ENCODE measurements at regions of chr3 and their contacts with region 1.

Region 1: DNA sequence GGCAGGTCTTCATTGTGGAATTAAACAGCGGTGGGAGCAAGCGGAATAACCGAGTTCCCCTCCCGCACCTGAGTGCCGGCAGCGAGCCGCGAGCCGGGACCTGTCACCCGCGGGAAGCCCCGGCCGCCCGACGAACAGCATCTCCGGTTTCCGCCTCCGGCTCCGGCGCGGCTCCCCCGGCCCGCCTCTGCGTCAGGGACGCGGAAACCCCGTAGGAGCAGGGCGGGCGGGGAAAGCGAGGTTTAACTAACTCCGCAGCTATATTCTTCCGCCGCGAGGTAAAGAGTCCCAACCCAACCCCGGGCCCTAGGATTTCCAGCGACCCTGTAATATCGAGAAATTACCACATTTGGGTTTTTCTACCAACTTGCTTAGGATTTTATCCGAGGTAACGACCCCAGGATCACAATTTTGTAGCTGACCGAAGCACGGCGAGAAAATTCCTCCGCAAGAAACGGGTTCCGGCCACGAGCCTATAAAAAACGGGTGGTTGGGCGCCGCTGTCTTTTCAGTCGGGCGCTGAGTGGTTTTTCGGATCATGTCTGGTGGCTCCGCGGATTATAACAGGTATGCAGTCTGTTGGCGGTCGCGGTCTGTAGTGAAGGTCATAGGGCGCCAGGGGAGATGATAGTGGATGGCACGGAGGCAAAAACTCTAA is at the start of gene EIF4A2:
- DNase-seq: peak; percentile 88
- ATAC-seq: peak; percentile 77
- H3K4me3 Mint-ChIP-seq: peak within 1 kb of the TSS; percentile 98
- H3K27ac Mint-ChIP-seq: peak within 1 kb of the TSS; percentile 99
- H3K4me1 Mint-ChIP-seq: peaks cover 48% of the 10 kb centered on the region
- H3K27me3 Mint-ChIP-seq: no peaks in the 10 kb centered on the region
- CTCF ChIP-seq: no peak
- total RNA-seq, gene EIF4A2: 533 and 574 TPM in 2 replicates

Region 2: DNA sequence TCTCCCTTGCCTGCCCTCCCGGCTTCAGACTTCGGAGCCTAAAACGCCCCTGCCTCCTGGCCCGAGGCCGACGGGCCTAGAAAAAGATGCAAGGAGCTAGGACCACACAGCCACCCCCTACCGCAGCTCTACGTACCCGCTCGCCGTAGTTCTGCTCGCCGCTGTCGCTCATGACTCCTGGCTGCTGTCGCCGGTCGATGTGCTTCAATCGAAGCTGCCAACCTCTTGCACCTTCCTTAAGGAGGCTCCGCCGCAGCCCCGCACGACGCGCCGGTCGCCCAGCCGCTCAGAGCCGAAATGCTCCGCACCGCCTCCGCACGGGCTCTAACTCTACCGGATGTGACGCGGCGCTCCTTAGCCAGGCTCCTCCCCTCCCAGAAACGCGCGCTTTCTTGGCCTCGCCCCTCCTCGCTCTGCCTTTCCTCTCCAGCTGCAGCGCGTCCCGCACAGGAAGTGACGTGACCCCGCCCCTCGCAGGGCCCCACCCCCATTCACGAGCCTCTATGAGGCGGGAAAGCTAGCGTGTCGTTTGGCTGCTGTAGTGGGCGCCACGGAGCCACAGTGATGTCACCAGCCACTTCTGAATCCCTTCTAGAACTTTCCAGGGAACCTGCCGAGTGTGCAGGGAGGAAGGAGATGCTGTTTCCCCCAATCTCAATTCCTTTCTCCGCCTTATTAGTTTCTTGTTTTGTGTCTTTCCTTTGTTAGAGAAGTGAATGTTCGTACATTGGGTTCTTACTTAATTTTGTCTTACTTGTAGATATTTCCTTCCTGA is 845.3 kb before region 1 on chr3 and contains the start of gene TRA2B:
- CTCF ChIA-PET with region 1: no interaction called
- POLR2A ChIA-PET with region 1: interaction called, 58 read pairs
- intact Hi-C with region 1: loop called (anchors 1 kb)
- DNase-seq: peak; percentile 96
- ATAC-seq: peak; percentile 87
- H3K4me3 Mint-ChIP-seq: peak within 1 kb of the TSS; percentile 99
- H3K27ac Mint-ChIP-seq: peak within 1 kb of the TSS; percentile 100
- H3K4me1 Mint-ChIP-seq: peaks cover 45% of the 10 kb centered on the region
- H3K27me3 Mint-ChIP-seq: no peaks in the 10 kb centered on the region
- CTCF ChIP-seq: no peak
- total RNA-seq, gene TRA2B: 213 and 219 TPM in 2 replicates

Region 3: DNA sequence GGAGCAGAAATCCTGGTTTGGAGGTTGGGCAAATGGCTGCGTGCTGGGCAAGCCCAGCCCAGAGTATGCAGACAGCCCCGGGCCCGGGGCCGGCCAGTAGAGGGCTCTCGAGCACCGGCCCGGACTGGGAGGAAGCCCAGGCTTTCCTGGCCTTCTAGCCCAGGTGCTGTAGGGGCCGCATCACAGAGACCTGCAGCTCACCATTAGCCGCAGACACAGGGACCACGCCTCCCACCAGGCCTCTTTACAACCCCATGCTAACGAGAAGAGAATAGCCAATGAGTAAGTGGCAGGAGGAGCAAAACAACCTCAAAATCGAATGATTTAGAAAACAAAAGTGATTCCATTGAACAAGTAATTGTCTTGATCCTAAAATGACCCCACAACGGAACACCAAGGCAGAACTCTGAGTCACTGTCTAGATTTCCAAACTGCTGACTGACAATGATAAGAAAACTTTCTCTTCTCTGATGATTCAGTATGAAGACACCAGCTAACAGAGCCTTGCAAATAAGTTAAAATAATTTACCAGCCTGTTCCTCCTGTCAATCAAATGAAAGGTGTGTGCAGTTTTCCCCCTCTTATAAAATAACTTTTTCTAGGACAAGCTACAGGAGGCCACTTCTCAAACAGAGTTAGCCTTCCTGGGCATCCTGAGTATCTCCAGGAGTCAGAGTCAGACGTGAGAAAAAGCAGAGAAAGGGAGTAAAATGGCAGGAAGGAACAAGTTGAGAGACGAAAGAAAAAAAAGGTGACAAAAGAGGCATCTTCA is 523.4 kb before region 1 on chr3:
- CTCF ChIA-PET with region 1: no interaction called
- POLR2A ChIA-PET with region 1: no interaction called
- intact Hi-C with region 1: loop called (anchors 10 kb)
- DNase-seq: peak; percentile 66
- ATAC-seq: peak; percentile 62
- H3K4me3 Mint-ChIP-seq: no peak overlapping the region
- H3K27ac Mint-ChIP-seq: peak overlapping the region; percentile 76
- H3K4me1 Mint-ChIP-seq: peaks cover 40% of the 10 kb centered on the region
- H3K27me3 Mint-ChIP-seq: no peaks in the 10 kb centered on the region
- CTCF ChIP-seq: peak; percentile 13

Region 4: DNA sequence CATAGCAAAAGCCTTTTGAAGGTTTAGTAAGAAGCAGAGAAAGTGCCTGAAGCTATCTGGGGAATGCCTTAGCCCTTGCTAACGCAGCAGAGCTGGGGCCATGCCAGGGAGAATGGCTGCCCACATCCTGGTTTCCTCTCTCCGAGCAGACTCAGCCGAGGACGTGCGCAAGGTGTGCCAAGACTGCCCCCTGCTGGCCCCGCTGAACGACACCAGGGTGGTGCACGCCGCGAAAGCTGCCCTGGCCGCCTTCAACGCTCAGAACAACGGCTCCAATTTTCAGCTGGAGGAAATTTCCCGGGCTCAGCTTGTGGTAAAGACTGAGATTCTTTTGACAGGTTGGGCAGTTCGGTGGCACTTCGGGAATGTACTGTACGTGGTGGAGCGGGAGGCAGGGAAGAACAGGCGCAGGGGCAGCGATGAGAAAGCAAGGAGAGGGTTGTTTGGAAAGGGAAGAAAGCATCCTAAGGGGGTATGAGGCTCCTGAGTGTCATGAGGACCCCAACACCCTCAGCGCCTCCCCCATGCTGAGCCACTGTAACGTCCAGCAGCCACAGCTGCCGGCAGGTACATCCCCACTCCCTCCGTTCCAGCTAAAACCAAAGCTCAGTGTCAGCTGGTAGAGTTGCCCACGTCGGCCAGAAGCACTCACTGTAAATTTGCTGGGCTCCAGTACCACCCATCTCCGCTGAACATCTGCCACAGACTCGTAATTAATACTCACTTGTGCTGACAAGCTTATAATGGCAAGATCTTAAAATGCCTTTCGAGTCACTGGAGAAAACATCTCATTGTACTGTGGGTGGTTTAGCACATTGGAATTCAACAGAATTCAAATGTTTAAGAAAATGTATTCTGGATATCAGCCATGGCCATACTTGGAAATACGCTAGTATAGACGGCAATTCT is 165.9 kb before region 1 on chr3:
- CTCF ChIA-PET with region 1: interaction called, 4 read pairs
- POLR2A ChIA-PET with region 1: interaction called, 18 read pairs
- intact Hi-C with region 1: no loop called
- DNase-seq: peak; percentile 65
- ATAC-seq: peak; percentile 97
- H3K4me3 Mint-ChIP-seq: peak overlapping the region; percentile 58
- H3K27ac Mint-ChIP-seq: no peak overlapping the region
- H3K4me1 Mint-ChIP-seq: peaks cover 16% of the 10 kb centered on the region
- H3K27me3 Mint-ChIP-seq: peaks cover 43% of the 10 kb centered on the region
- CTCF ChIP-seq: peak; percentile 47

Region 5: GRCh38 chr3:186798239-186798874 is 15.2 kb after region 1 on chr3:
- CTCF ChIA-PET with region 1: no interaction called
- POLR2A ChIA-PET with region 1: interaction called, 24 read pairs
- intact Hi-C with region 1: no loop called
- DNase-seq: no peak
- ATAC-seq: no peak
- H3K4me3 Mint-ChIP-seq: no peak overlapping the region
- H3K27ac Mint-ChIP-seq: no peak overlapping the region
- H3K4me1 Mint-ChIP-seq: peaks cover 9% of the 10 kb centered on the region
- H3K27me3 Mint-ChIP-seq: no peaks in the 10 kb centered on the region
- CTCF ChIP-seq: no peak

Region 6: GRCh38 chr3:186871403-186871924 is 88.3 kb after region 1 on chr3:
- CTCF ChIA-PET with region 1: no interaction called
- POLR2A ChIA-PET with region 1: no interaction called
- intact Hi-C with region 1: no loop called
- DNase-seq: no peak
- ATAC-seq: no peak
- H3K4me3 Mint-ChIP-seq: no peak overlapping the region
- H3K27ac Mint-ChIP-seq: no peak overlapping the region
- H3K4me1 Mint-ChIP-seq: peaks cover 11% of the 10 kb centered on the region
- H3K27me3 Mint-ChIP-seq: no peaks in the 10 kb centered on the region
- CTCF ChIP-seq: no peak

Region 7: DNA sequence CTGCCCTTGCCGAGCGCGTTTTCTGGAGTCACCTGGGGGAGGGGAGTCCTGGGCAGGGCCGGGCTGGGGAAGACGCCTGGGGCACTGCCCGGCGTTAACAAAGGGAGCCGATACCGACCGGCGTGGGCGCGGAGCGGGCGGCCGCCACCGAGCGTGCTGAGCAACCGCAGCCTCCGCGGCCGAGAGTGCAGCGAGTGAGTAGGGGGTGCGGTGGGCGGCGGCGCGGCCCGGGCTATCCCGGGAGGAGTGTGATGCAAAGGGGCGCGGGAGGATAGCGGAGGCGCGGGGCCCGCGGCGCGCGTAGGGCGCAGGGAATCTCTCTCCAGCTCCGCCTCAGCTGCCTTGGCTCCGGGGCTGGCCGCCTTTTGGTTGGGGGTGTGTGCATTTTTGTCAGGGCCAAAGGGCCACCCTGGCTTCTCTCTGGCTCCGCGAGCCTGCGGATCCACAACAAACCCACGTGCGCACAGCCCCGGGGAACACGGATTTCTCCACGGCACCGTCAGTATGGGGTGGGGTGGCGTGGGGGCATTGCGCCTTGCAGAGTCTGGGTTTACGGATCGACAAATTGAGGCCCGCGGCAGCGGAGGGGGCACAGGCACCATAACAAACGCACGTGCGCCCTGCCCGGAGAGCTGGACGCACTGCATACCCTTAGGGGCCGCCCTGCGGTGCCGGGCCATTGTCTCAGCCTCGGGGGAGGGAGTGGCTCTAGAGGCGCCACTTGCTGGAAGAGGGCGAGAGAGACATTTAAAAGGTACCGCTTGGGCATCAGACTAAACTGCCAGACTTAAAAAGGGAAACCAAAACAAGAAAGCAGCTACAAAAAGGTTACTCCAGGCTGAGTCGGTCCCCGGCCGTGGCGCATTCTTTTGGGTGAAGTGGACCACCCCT is 147.7 kb after region 1 on chr3:
- CTCF ChIA-PET with region 1: no interaction called
- POLR2A ChIA-PET with region 1: interaction called, 29 read pairs
- intact Hi-C with region 1: loop called (anchors 1 kb)
- DNase-seq: peak; percentile 65
- ATAC-seq: peak; percentile 83
- H3K4me3 Mint-ChIP-seq: peak overlapping the region; percentile 98
- H3K27ac Mint-ChIP-seq: peak overlapping the region; percentile 94
- H3K4me1 Mint-ChIP-seq: peaks cover 53% of the 10 kb centered on the region
- H3K27me3 Mint-ChIP-seq: no peaks in the 10 kb centered on the region
- CTCF ChIP-seq: no peak

Region 8: DNA sequence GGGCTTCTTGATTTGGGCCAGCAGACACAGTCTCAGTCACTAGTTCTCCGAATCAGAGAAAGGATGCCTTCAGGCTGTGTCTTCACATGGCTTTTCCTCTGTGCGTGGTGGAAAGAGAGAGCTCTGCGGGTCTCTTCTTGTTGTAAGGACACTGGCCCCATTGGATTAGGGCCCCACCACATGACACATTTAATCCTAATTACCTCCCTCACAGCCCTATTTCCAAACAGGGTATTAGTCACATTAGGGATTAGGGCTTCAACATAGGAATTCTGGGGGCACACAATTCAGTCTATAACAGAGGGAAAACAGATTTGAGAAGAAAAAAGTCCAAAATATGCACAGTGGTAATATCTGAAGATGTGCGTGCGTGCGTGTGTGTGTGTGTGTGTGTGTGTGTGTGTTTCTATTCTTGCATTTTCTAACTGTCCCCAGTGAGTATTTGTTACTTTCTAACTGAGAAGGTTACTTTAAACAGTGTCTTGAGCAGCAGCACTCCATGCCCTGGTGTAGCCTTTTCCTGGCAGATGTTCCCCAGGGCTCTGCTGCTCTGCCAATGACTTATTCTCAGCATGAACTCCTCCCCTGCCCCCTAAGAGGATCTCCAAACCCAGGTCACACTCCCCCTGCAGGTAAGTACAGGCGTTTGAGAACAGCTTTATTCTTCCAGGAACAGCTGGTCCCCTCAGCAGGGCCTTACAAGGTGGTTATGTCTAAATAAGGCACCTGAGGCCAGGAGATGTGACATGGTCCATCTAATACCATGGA is 283.2 kb after region 1 on chr3:
- CTCF ChIA-PET with region 1: no interaction called
- POLR2A ChIA-PET with region 1: interaction called, 14 read pairs
- intact Hi-C with region 1: no loop called
- DNase-seq: no peak
- ATAC-seq: peak; percentile 39
- H3K4me3 Mint-ChIP-seq: peak overlapping the region; percentile 68
- H3K27ac Mint-ChIP-seq: peak overlapping the region; percentile 92
- H3K4me1 Mint-ChIP-seq: peaks cover 97% of the 10 kb centered on the region
- H3K27me3 Mint-ChIP-seq: no peaks in the 10 kb centered on the region
- CTCF ChIP-seq: no peak